Uterus (tissue), 4 donors: ENCODE measurements at regions of chr10 and their contacts with region 1.

Region 1: DNA sequence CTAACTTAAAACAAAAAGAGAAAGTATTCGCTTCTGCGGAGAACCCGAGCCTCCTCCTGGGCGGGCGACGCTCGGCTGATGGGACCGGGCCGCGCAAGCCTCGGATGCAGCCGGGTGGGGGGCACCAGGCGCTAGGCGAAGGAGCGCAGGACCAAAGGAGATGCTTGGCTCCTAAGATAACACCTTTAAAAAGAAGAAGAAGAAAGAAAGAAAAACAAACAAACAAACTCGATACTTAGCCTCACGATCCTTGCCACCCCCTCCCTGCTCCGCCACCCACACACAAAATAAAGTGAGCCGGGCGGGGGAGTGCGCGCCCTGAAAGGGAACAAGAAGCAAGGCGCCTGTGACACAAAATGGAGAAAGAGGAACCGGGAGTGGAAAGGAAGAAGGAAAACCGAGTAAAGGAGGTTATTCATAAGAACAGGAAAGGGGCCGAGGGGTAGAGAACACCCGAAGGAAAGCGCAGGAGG is 34.0 kb upstream of the EBLN1 start:
- DNase-seq: peak; percentile 63 to 64
- H3K4me3 ChIP-seq: peak overlapping the region; percentile 38 to 77
- H3K27ac ChIP-seq: peak overlapping the region; percentile 98
- H3K4me1 ChIP-seq: no peaks in the 10 kb centered on the region
- H3K27me3 ChIP-seq: no peaks in the 10 kb centered on the region
- CTCF ChIP-seq: no peak
- POLR2A ChIP-seq: no peak

Region 2: DNA sequence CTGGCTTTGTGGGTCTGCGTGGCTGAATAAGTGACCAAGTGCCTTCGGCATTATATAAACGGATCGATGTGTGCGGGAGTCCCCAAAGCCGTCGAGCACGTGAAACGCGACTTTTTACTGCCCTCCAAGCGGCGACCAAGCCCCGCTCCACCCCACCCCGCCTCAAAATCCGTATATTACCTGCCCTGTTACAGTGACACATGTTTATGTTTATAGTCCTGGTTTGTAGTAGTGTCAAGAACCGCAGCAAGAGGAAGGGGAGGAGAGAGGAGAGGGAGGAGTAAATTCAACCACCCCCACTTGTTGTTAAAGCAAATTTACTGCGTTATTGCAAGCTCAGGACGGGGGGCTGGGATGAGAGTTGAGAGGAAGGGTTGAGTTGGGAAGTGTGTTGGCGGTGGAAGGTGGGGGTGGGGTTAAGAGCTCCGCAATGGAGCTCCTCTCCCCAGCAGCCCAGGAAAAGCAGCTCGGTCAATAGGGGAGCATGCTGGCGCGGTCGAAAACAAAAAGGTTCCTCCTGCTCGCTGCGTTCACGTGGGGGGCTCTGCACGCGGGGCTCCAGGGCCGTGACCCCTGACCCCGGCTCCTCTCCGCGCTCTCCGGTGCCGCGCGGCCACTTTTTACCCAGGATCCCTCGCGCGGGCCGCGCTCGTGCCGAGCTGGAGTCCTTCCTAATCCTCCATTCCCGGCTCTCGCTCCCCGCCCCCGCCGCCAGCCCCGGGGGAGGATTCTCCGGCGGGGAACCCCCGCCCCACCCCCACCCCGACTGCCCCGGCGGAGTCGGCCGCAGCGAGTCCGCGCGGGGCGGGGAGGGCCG is 726.2 kb before region 1 on chr10 and contains the start of gene SKIDA1:
- intact Hi-C with region 1: loop called (anchors 10 kb)
- DNase-seq: peak; percentile 84 to 89
- H3K4me3 ChIP-seq: peak within 1 kb of the TSS; percentile 70 to 75
- H3K27ac ChIP-seq: peak within 1 kb of the TSS; percentile 99 to 100
- H3K4me1 ChIP-seq: no peaks in the 10 kb centered on the region
- H3K27me3 ChIP-seq: no peaks in the 10 kb centered on the region
- CTCF ChIP-seq: peak in 1 of 4 experiments; percentile 18
- POLR2A ChIP-seq: peak in 1 of 2 donors; percentile 19
- total RNA-seq, gene SKIDA1: 0.26 to 4.9 (median 1.6) TPM in 3 of 4 donors, not detected in the other

Region 3: DNA sequence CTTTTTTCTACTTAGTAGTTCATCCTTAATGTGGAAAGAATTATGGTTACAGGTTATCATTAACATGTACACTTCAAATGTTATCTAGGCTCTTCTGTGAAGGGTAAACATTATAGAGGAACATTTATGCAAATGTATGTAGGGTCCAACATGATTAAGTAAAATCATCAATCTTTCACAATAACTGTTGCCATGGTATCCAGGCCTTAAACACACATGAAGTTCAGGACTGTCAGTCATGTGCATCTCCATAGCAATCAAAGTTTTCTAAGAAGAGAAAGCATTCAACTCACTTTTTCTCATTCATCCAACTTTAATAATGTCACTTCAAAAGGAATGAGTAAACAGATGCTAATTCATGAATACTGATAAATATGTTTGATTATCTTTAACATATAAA is 331.9 kb before region 1 on chr10:
- intact Hi-C with region 1: no loop called
- DNase-seq: no peak
- H3K4me3 ChIP-seq: no peak overlapping the region
- H3K27ac ChIP-seq: no peak overlapping the region
- H3K4me1 ChIP-seq: no peaks in the 10 kb centered on the region
- H3K27me3 ChIP-seq: no peaks in the 10 kb centered on the region
- CTCF ChIP-seq: no peak
- POLR2A ChIP-seq: no peak

Region 4: DNA sequence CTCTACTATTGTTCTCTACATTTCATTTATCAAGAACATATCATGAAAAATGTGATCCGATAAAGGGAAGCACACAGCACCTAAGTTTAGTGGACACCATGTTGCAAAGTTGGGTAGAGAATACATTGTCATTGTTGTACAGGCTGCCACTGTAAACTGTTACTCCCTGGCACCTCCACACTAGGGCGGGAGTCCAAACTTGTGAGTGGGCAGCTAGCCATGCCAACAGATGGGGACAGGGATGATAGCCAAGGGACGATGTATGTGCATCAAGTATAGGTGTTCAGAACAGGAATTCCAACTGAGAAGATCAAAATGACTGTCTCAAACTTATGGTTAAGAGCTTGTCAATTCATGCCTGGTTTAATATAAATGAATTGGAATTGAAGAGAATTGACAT is 33.3 kb after region 1 on chr10:
- intact Hi-C with region 1: no loop called
- DNase-seq: no peak
- H3K4me3 ChIP-seq: no peak overlapping the region
- H3K27ac ChIP-seq: no peak overlapping the region
- H3K4me1 ChIP-seq: no peaks in the 10 kb centered on the region
- H3K27me3 ChIP-seq: no peaks in the 10 kb centered on the region
- CTCF ChIP-seq: no peak
- POLR2A ChIP-seq: no peak

Region 5: GRCh38 chr10:22369434-22370072 is 117.8 kb after region 1 on chr10:
- intact Hi-C with region 1: no loop called
- DNase-seq: no peak
- H3K4me3 ChIP-seq: no peak overlapping the region
- H3K27ac ChIP-seq: no peak overlapping the region
- H3K4me1 ChIP-seq: no peaks in the 10 kb centered on the region
- H3K27me3 ChIP-seq: peaks cover 0 to 3% of the 10 kb centered on the region in 2 donors
- CTCF ChIP-seq: no peak
- POLR2A ChIP-seq: no peak

Region 6: GRCh38 chr10:22503315-22504076 is 251.7 kb after region 1 on chr10:
- intact Hi-C with region 1: no loop called
- DNase-seq: no peak
- H3K4me3 ChIP-seq: no peak overlapping the region
- H3K27ac ChIP-seq: no peak overlapping the region
- H3K4me1 ChIP-seq: no peaks in the 10 kb centered on the region
- H3K27me3 ChIP-seq: no peaks in the 10 kb centered on the region
- CTCF ChIP-seq: no peak
- POLR2A ChIP-seq: no peak